Heart right ventricle (tissue), 16 donors: ENCODE measurements at regions of chr13 and their contacts with region 1.

Region 1: GRCh38 chr13:70703755-70704154 is 595.5 kb upstream of the KLHL1 start:
- DNase-seq: no peak
- ATAC-seq: no peak
- H3K4me3 ChIP-seq: no peak overlapping the region
- H3K27ac ChIP-seq: no peak overlapping the region
- H3K4me1 ChIP-seq: no peaks in the 10 kb centered on the region
- H3K27me3 ChIP-seq: no peaks in the 10 kb centered on the region
- CTCF ChIP-seq: no peak

Region 2: GRCh38 chr13:70668283-70668682 is 35.5 kb before region 1 on chr13:
- intact Hi-C with region 1: loop called in 1 of 10 experiments (anchors 1 kb)
- DNase-seq: no peak
- ATAC-seq: no peak
- H3K4me3 ChIP-seq: no peak overlapping the region
- H3K27ac ChIP-seq: no peak overlapping the region
- H3K4me1 ChIP-seq: no peaks in the 10 kb centered on the region
- H3K27me3 ChIP-seq: no peaks in the 10 kb centered on the region
- CTCF ChIP-seq: no peak